CD4-positive, alpha-beta T cell (primary cell): ENCODE measurements at regions of chr3 and their contacts with region 1.

Region 1: DNA sequence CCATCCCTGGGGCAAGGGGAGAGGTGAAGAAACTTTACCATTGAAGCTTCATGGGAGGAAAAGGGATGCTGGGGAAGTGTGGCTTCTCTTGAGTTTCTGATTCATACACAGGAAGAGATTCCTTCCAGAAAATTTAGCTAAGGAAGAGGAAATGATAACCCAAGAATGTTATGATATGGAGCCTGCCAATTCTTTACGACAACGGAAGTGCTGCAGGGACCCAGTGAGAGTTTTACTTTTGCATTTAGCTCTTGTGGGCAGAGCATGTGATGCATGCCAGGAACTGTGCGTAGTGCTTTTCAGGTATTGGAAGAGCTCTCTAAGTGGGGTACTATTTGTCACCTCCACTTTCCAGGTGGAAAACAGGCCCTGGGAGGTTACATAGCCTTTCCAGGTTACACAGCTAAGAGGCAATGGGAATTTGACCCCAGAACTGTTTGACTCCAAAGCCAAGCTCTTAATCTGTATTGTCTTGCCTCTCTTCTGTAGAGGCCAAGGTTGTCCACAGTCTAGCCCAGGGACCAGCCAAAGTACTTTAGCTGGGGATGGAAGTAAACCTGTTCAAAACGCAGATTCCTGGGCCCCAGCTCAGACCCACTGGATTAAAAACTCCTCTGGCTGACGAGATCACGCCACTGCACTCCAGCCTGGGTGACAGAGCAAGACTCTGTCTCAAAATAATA is 23.0 kb downstream of the CMTM7 start:
- DNase-seq: peak in 10 of 14 experiments; percentile 34 to 86 (median 52)
- ATAC-seq: peak; percentile 95
- H3K4me3 ChIP-seq: no peak overlapping the region
- H3K4me3 Mint-ChIP-seq: peak overlapping the region; percentile 43
- H3K27ac ChIP-seq: peak overlapping the region; percentile 39 to 76
- H3K27ac Mint-ChIP-seq: peak overlapping the region; percentile 95
- H3K4me1 ChIP-seq: peaks cover 41% of the 10 kb centered on the region
- H3K4me1 Mint-ChIP-seq: peaks cover 83% of the 10 kb centered on the region
- H3K27me3 ChIP-seq: no peaks in the 10 kb centered on the region
- H3K27me3 Mint-ChIP-seq: no peaks in the 10 kb centered on the region
- CTCF ChIP-seq: no peak

Region 2: DNA sequence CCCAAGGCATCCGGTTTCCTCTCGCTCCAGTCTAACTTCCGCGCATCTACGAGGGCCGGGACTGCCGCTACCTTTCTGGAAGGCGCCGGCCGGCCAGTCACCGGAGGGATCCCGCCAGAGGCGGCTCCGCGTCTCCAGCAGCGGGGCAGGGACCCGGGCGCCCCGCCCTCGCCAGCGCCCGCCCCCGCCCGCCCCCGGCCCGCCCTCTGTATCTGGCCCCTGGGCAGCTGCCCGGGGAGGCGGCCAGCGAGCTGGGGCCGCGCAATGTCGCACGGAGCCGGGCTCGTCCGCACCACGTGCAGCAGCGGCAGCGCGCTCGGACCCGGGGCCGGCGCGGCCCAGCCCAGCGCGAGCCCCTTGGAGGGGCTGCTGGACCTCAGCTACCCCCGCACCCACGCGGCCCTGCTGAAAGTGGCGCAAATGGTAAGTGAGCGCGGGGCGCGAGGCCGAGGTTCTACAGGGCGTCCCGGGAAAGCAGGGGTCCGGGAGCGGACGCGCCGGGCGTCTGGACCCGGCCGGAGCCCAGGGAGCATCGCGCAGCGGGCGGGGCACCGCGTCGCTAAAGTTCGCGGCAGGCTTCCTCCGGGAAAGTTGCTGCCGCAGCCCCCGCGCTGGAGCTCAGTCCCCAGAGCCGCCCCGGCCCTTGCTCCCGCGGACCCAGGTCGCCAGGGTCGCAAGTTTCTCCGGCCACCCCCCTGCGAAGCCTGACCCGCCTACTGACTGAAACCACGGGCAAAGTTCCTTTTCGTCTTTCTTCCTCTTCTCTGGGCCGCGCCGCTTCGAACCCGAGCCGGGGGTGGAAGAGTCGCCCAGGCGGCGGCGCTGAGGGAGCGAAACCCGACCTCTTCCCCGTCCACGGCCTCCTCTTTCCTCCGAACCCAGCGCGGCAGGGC is 22.8 kb before region 1 on chr3 and contains the start of gene CMTM7:
- CTCF ChIA-PET with region 1: interaction called, 4 read pairs
- POLR2A ChIA-PET with region 1: interaction called, 17 read pairs
- intact Hi-C with region 1: no loop called
- DNase-seq: peak; percentile 32 to 81 (median 52)
- ATAC-seq: peak; percentile 54
- H3K4me3 ChIP-seq: peak within 1 kb of the TSS; percentile 92
- H3K4me3 Mint-ChIP-seq: peak within 1 kb of the TSS; percentile 97
- H3K27ac ChIP-seq: peak within 1 kb of the TSS; percentile 77 to 79
- H3K27ac Mint-ChIP-seq: peak within 1 kb of the TSS; percentile 91
- H3K4me1 ChIP-seq: peaks cover 47% of the 10 kb centered on the region
- H3K4me1 Mint-ChIP-seq: peaks cover 61% of the 10 kb centered on the region
- H3K27me3 ChIP-seq: no peaks in the 10 kb centered on the region
- H3K27me3 Mint-ChIP-seq: no peaks in the 10 kb centered on the region
- CTCF ChIP-seq: no peak
- total RNA-seq, gene CMTM7: 31.5 to 35.2 TPM

Region 3: GRCh38 chr3:32401556-32402081 is 13.0 kb before region 1 on chr3:
- CTCF ChIA-PET with region 1: interaction called, 4 read pairs
- POLR2A ChIA-PET with region 1: interaction called, 11 read pairs
- intact Hi-C with region 1: loop called in 1 of 2 experiments (anchors 2 kb)
- DNase-seq: peak; percentile 37 to 84 (median 58)
- ATAC-seq: peak; percentile 73
- H3K4me3 ChIP-seq: peak overlapping the region; percentile 65
- H3K4me3 Mint-ChIP-seq: peak overlapping the region; percentile 92
- H3K27ac ChIP-seq: peak overlapping the region; percentile 85 to 92
- H3K27ac Mint-ChIP-seq: peak overlapping the region; percentile 90
- H3K4me1 ChIP-seq: peaks cover 62% of the 10 kb centered on the region
- H3K4me1 Mint-ChIP-seq: peaks cover 77% of the 10 kb centered on the region
- H3K27me3 ChIP-seq: no peaks in the 10 kb centered on the region
- H3K27me3 Mint-ChIP-seq: no peaks in the 10 kb centered on the region
- CTCF ChIP-seq: no peak